Aorta (tissue), 5 donors: ENCODE measurements at regions of chr1 and their contacts with region 1.

Region 1: DNA sequence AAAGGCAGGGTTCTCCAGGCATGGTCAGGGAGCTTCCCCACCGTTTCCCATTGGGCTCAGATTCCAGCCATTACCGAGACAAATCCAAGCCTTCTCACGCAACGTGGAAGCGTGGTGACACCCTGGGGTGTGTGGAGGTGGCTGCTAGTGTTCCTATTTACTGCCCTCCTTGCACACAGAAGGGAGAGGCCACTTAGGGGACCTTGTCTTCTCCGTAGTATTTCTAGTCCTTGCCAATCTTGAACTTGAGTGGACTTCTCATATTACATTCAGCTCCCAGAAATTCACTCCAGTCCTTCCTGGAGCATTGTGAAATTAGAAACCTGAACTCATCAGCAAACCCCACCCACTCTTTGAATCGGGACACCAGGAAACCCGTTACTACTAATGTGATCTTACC is 131.6 kb downstream of the AJAP1 start:
- DNase-seq: no peak
- ATAC-seq: no peak
- H3K4me3 ChIP-seq: no peak overlapping the region
- H3K27ac ChIP-seq: no peak overlapping the region
- H3K4me1 ChIP-seq: no peaks in the 10 kb centered on the region
- H3K27me3 ChIP-seq: no peaks in the 10 kb centered on the region

Region 2: DNA sequence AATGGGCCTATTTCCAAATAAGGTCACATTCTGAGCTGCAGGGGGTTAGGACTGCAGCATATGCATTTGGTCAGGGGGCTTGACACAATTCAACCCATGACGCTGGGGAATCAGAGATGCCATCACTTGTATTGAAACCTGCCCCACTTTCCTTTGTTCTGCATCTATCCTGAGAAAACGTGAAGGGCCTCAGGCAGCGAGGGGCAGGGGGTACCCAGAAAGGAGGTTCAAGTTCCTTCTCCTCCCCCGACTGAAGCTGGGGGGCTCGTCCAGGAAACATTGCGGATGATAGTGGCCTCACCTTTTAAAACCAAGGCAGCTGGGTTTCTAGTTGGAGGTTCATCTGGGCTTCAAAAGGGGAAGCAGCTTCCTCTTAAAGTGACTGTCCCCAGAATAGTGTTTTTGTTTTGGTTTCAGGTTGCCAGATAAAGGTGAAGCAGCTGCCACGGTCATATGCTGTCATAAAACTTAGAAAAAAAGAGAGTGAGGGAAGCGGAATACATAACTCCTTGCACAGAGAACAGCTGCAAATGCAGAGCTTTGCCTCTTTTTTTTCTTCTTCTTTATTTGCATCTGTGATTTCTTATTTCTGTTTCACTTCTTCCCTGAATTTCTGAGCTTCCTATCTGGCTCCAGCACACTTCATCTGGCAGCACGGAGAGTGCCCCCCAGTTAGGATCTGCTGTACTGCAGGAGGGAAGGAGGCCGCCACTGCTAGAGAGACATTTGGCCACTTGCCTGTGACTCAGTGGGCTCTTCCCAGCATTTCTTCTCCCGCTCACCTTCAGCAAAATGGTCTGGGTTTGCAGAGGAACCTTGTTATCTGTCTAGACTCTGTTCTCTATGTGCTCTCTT is 10.3 kb after region 1 on chr1:
- intact Hi-C with region 1: loop called in 1 of 2 experiments (anchors 1 kb)
- DNase-seq: no peak
- ATAC-seq: no peak
- H3K4me3 ChIP-seq: no peak overlapping the region
- H3K27ac ChIP-seq: no peak overlapping the region
- H3K4me1 ChIP-seq: no peaks in the 10 kb centered on the region
- H3K27me3 ChIP-seq: no peaks in the 10 kb centered on the region

Region 3: GRCh38 chr1:4825800-4826450 is 39.9 kb after region 1 on chr1:
- intact Hi-C with region 1: no loop called
- DNase-seq: no peak
- ATAC-seq: no peak
- H3K4me3 ChIP-seq: no peak overlapping the region
- H3K27ac ChIP-seq: no peak overlapping the region
- H3K4me1 ChIP-seq: no peaks in the 10 kb centered on the region
- H3K27me3 ChIP-seq: no peaks in the 10 kb centered on the region